Activated naive CD4-positive, alpha-beta T cell treated with anti-CD3 and anti-CD28 coated beads for 36 hours (primary cell): ENCODE measurements at regions of chr4 and their contacts with region 1.

Region 1: DNA sequence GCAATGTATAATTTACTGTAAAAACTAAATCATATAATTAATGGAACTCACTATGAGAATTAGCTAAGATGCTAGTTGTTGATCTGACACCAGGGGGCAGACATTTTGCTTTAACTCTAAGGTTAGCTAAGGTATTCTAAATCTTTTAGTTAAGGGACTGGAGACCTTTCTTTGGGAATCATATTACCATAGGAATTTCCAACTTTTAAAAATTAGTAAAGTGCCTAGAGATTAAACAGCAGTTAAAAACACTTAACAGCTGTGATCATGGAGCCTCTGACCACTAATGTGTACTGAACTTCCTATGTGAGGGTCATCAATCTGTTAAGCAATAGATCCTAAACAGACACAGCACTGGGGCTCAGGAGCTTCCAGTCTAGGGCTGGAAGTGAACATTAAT is 226.6 kb downstream of the NSUN7 start:
- DNase-seq: peak; percentile 47
- H3K4me3 Mint-ChIP-seq: no peak overlapping the region
- H3K27ac Mint-ChIP-seq: no peak overlapping the region
- H3K4me1 Mint-ChIP-seq: no peaks in the 10 kb centered on the region
- H3K27me3 Mint-ChIP-seq: peaks cover 9% of the 10 kb centered on the region

Region 2: DNA sequence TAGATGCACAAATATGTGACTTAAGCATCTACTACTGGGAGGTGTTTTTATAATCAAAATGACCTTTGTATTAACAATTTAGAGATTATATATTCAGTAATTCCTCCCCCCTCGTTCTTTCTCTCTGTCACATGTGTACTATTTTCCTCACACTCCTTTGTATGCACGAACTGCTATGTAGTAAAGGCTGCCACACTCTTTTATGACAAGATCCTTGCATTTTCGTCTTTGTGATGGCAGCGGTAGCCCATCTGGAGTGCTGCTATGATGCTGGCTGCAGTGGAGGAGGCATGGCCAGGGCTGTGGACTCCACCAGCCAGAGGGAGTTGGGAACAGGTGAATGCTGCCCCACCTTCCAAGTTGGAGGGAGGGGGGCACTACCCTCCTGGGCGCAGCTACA is 10.3 kb before region 1 on chr4:
- CTCF ChIA-PET with region 1: no interaction called
- intact Hi-C with region 1: no loop called
- DNase-seq: no peak
- H3K4me3 Mint-ChIP-seq: no peak overlapping the region
- H3K27ac Mint-ChIP-seq: no peak overlapping the region
- H3K4me1 Mint-ChIP-seq: no peaks in the 10 kb centered on the region
- H3K27me3 Mint-ChIP-seq: peaks cover 3% of the 10 kb centered on the region

Region 3: GRCh38 chr4:41232406-41232805 is 256.1 kb after region 1 on chr4:
- CTCF ChIA-PET with region 1: no interaction called
- intact Hi-C with region 1: loop called (anchors 5 kb)
- DNase-seq: no peak
- H3K4me3 Mint-ChIP-seq: no peak overlapping the region
- H3K27ac Mint-ChIP-seq: no peak overlapping the region
- H3K4me1 Mint-ChIP-seq: no peaks in the 10 kb centered on the region
- H3K27me3 Mint-ChIP-seq: peaks cover 6% of the 10 kb centered on the region

Region 4: DNA sequence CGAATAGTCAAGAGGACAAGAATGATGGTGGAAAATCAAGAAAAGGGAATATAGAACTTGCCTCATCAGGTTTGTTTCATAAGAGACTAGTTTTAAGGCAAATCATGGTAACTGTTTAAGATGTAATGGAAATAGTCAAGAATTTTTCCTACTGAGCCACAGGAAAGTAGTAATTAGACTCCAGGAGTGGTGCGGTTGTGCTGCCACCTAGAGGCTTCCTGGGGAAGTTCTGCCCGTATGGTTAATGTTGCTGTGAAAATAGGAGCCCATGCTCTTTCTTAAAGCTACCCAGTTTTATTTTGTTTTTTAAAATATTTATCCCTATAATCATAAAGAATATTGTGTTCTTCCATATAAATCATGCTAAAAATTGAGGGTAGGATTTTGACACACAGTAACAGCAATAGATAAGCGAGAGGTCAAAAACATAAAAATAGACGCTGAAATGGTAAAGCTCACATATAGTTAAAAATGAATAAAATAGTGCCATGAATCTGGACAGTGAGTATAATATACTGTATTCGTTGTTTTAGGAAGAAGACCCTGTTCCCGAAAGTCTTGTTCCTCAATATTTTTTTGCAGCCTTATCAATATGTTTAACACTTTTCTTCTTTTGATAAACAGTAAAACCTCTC is 685.2 kb after region 1 on chr4:
- CTCF ChIA-PET with region 1: no interaction called
- intact Hi-C with region 1: loop called (anchors 1 kb)
- DNase-seq: peak; percentile 66
- H3K4me3 Mint-ChIP-seq: no peak overlapping the region
- H3K27ac Mint-ChIP-seq: no peak overlapping the region
- H3K4me1 Mint-ChIP-seq: peaks cover 4% of the 10 kb centered on the region
- H3K27me3 Mint-ChIP-seq: peaks cover 2% of the 10 kb centered on the region